Calu3 (cell line): ENCODE measurements at regions of chr7 and their contacts with region 1.

Region 1: GRCh38 chr7:2863461-2864066 is 19.5 kb upstream of the GNA12 start:
- DNase-seq: peak; percentile 96
- H3K4me3 Mint-ChIP-seq: peak overlapping the region; percentile 72
- H3K27ac Mint-ChIP-seq: peak overlapping the region; percentile 100
- H3K4me1 Mint-ChIP-seq: peaks cover 44% of the 10 kb centered on the region
- H3K27me3 Mint-ChIP-seq: no peaks in the 10 kb centered on the region
- CTCF ChIP-seq: no peak

Region 2: DNA sequence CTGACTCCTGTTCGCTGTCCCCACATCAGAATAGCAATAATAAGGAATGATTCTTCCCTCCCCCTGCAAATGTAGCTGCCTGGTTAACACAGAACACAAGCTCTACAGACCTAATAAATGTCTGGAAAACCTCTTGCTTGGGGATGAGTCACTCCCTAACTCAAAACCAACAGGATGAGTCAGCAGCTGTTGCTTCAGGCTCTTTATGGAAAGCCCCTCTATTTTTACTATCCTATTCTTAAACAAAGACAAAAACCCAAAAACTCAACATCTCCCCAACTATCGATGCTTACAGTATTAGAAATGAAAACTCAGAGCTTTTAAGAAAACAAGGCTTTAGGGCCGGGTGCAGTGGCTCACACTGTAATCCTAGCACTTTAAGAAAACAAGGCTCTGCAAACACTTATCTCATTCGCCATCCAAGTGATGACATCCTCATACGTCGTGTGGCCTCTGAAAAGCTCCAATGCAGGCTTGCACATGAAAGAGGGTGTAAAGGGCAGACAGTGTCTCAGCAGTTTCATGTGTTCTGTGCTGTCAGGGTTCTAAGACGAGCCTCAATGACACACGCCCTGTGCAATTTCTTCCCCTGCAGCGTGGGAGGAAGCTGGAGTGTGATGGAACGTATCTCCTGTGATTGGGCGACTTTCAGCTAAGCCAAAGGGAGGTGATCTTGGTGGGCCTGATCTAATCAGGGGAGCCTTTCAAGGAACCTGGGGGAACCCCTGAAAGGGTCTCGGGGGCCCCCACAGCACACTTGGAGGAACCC is 105.5 kb before region 1 on chr7:
- CTCF ChIA-PET with region 1: interaction called, 14 read pairs
- intact Hi-C with region 1: loop called (anchors 5 kb)
- DNase-seq: peak; percentile 58
- H3K4me3 Mint-ChIP-seq: peak overlapping the region; percentile 49
- H3K27ac Mint-ChIP-seq: peak overlapping the region; percentile 84
- H3K4me1 Mint-ChIP-seq: peaks cover 53% of the 10 kb centered on the region
- H3K27me3 Mint-ChIP-seq: no peaks in the 10 kb centered on the region
- CTCF ChIP-seq: no peak

Region 3: DNA sequence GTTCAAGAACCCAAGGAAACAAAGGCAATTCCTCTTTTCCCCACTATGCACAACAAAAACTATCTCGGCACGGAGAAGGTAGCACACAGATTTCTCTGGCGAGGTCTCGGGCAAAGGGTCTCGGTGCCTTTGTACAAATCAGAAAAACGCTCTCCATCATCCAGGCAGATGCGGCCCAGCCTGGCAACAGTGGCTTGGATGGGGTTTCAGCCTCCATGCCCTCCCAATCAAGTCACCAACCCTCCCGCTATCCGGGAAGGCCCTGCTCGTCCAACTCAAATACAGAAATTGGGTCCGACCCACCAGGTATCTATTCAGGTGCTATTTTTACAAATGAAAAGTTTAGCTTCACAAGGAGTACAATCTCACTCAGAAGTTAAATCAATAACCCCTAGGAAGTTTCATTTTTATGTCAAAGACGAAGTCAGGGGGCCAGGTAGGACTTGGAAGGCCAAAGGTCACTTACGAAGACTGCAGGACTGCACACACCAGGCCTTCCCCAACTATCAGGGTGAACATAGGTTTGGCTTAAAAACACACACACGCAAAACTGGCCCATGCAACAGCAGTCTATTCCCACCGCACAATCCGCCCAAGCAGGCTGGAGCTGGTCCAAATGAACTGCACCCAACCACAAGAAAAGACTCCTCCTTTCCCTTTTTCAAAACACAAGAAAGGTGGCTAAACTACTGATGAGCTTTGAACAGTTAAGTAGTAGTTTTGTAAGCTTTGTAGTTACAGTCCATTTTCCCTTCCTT is 62.5 kb before region 1 on chr7:
- CTCF ChIA-PET with region 1: no interaction called
- intact Hi-C with region 1: no loop called
- DNase-seq: peak; percentile 50
- H3K4me3 Mint-ChIP-seq: peak overlapping the region; percentile 19
- H3K27ac Mint-ChIP-seq: peak overlapping the region; percentile 41
- H3K4me1 Mint-ChIP-seq: peaks cover 58% of the 10 kb centered on the region
- H3K27me3 Mint-ChIP-seq: no peaks in the 10 kb centered on the region
- CTCF ChIP-seq: no peak

Region 4: DNA sequence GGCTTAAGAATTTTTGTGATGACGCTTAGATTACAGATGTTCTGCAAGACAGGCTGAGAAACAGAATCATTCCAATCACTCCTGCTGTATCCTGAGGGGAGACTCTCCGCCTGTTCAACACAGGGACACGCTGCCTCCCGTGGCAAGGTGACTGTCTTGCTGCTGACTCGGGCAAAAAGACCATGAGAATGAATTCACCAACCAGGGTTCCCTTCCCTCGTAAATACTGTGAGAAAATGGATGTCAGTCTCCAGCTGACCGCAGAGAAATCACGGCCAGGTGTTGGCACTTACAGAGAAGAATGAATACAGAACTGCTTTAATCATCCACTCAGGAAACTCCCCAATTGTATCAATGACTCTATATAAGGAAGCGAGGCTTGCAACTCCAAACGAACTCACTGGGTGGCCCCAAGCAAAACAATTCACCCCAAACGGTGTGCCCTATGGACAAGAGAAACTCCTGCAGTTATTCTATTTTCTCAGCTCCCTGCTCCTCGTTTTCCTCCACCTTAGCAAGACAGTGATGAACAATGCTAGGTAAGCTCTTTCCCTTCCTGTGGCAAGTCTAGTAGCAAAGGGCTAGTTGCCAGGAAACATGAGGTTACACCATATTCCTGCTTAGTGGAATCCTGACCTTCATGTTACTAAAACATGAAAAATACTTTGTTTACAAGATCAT is 42.3 kb before region 1 on chr7:
- CTCF ChIA-PET with region 1: interaction called, 5 read pairs
- intact Hi-C with region 1: loop called (anchors 5 kb)
- DNase-seq: peak; percentile 62
- H3K4me3 Mint-ChIP-seq: peak overlapping the region; percentile 51
- H3K27ac Mint-ChIP-seq: peak overlapping the region; percentile 84
- H3K4me1 Mint-ChIP-seq: peaks cover 56% of the 10 kb centered on the region
- H3K27me3 Mint-ChIP-seq: no peaks in the 10 kb centered on the region
- CTCF ChIP-seq: peak; percentile 18

Region 5: GRCh38 chr7:2844165-2844898 is 19.2 kb before region 1 on chr7 and contains the start of gene GNA12:
- CTCF ChIA-PET with region 1: interaction called, 7 read pairs
- intact Hi-C with region 1: loop called (anchors 2 kb)
- DNase-seq: peak; percentile 100
- H3K4me3 Mint-ChIP-seq: peak within 1 kb of the TSS; percentile 81
- H3K27ac Mint-ChIP-seq: peak within 1 kb of the TSS; percentile 72
- H3K4me1 Mint-ChIP-seq: peaks cover 22% of the 10 kb centered on the region
- H3K27me3 Mint-ChIP-seq: no peaks in the 10 kb centered on the region
- CTCF ChIP-seq: no peak
- total RNA-seq, gene GNA12: 75.4 and 78.3 TPM in 2 replicates

Region 6: GRCh38 chr7:2894118-2894940 is 30.8 kb after region 1 on chr7:
- CTCF ChIA-PET with region 1: no interaction called
- intact Hi-C with region 1: no loop called
- DNase-seq: no peak
- H3K4me3 Mint-ChIP-seq: no peak overlapping the region
- H3K27ac Mint-ChIP-seq: no peak overlapping the region
- H3K4me1 Mint-ChIP-seq: no peaks in the 10 kb centered on the region
- H3K27me3 Mint-ChIP-seq: peaks cover 27% of the 10 kb centered on the region
- CTCF ChIP-seq: no peak

Region 7: GRCh38 chr7:3154912-3155494 is 291.4 kb after region 1 on chr7:
- CTCF ChIA-PET with region 1: no interaction called
- intact Hi-C with region 1: loop called (anchors 1 kb)
- DNase-seq: peak; percentile 69
- H3K4me3 Mint-ChIP-seq: no peak overlapping the region
- H3K27ac Mint-ChIP-seq: no peak overlapping the region
- H3K4me1 Mint-ChIP-seq: peaks cover 22% of the 10 kb centered on the region
- H3K27me3 Mint-ChIP-seq: no peaks in the 10 kb centered on the region
- CTCF ChIP-seq: peak; percentile 88

Region 8: DNA sequence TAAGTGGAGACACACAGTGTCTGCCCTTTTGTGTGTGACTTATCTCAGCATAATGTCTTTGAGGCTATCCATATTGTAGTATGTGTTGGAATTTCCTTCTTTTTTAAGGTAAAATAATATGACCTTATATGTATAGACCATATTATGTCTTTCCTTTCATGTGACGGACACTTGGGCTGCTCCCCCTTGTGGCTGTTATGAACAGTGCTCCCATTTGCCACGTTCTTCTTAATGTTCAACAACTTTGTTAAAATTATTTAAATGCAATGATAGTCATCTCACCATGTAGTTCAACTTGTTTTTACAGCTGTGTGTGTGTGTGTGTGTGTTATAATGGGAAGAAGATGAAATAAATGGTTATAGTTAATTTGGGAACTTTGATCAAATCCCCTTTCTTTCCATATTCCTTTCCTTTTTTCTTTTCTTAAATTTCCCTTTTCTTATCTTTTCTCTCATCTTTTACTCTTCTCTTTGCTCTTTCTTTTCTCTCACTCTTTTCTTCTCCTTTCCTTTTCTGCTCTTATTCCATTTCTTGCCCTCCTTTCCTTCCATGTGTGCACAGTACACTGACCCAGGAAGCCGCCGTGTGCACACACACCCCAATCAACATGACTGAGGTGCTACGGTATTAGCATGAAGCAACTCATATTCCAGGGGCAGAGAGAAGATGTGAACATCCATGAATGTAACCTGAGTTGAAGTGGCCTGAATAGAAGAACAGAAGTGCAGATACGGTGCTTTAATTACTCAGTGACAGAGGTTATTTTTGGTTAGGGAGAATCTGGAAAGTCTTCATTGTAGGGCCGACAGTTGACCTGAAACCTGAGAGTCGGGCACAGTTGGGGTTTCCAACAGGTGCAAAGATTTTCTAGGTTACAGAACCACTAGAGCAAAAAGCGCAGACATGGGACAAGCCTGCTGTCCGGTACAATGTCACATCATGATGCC is 1034.1 kb after region 1 on chr7:
- CTCF ChIA-PET with region 1: interaction called, 3 read pairs
- intact Hi-C with region 1: loop called (anchors 10 kb)
- DNase-seq: peak; percentile 63
- H3K4me3 Mint-ChIP-seq: no peak overlapping the region
- H3K27ac Mint-ChIP-seq: no peak overlapping the region
- H3K4me1 Mint-ChIP-seq: peaks cover 31% of the 10 kb centered on the region
- H3K27me3 Mint-ChIP-seq: no peaks in the 10 kb centered on the region
- CTCF ChIP-seq: peak; percentile 85